Activated CD4-positive, alpha-beta T cell treated with anti-CD3 and anti-CD28 coated beads for 36 hours (primary cell): ENCODE measurements at regions of chr22 and their contacts with region 1.

Region 1: DNA sequence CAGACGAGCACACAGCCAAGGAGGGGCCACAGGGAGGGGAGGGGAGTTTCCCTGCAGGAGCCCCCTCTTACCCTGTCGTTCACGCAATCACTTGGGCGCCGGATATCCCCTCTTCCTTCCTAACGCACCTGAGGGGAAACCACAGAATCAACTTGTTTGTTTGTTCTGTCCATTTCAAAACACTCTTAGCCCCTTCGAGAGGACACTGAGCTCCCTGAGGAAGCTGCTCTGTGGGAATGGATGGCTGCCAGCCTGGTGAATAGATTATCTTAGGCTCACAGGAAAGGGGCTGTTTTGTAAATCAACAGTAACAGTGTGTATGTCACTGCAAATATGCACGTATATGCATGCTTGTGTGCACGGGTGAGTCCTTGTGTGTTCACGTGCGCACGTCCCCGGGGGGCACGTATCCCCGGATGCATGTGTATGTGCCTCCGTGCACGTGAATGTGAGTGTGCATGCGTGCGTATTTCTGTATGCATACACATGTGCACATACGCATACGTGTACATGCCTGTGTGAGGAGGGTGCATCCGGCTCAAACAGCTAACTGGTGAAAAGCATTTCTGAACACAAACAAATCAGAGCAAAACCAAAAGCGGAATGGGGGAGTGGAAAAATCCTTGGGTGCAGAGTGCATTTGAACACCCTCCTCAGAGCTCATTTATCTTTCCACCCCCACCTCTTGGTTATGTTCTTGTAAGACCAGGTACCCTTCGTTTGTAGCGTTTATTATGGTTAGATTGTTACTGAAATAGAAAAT is 7.2 kb downstream of the ARSA start:
- DNase-seq: peak; percentile 87
- ATAC-seq: peak; percentile 70
- H3K4me3 Mint-ChIP-seq: peak overlapping the region; percentile 80
- H3K27ac Mint-ChIP-seq: peak overlapping the region; percentile 97
- H3K4me1 Mint-ChIP-seq: peaks cover 40% of the 10 kb centered on the region
- H3K27me3 Mint-ChIP-seq: no peaks in the 10 kb centered on the region

Region 2: GRCh38 chr22:50244420-50245213 is 376.2 kb before region 1 on chr22 and contains the start of gene TUBGCP6:
- CTCF ChIA-PET with region 1: interaction called, 3 read pairs
- POLR2A ChIA-PET with region 1: interaction called, 4 read pairs
- intact Hi-C with region 1: loop called (anchors 1 to 5 kb)
- DNase-seq: peak; percentile 96
- ATAC-seq: peak; percentile 80
- H3K4me3 Mint-ChIP-seq: peak within 1 kb of the TSS; percentile 94
- H3K27ac Mint-ChIP-seq: peak within 1 kb of the TSS; percentile 100
- H3K4me1 Mint-ChIP-seq: peaks cover 23% of the 10 kb centered on the region
- H3K27me3 Mint-ChIP-seq: no peaks in the 10 kb centered on the region
- total RNA-seq, gene TUBGCP6: 42.2 to 49.2 TPM

Region 3: GRCh38 chr22:50469377-50470305 is 151.1 kb before region 1 on chr22:
- CTCF ChIA-PET with region 1: interaction called, 7 read pairs
- POLR2A ChIA-PET with region 1: interaction called, 4 read pairs
- intact Hi-C with region 1: loop called (anchors 1 kb)
- DNase-seq: peak; percentile 97
- ATAC-seq: peak; percentile 84
- H3K4me3 Mint-ChIP-seq: peak overlapping the region; percentile 59
- H3K27ac Mint-ChIP-seq: peak overlapping the region; percentile 95
- H3K4me1 Mint-ChIP-seq: peaks cover 53% of the 10 kb centered on the region
- H3K27me3 Mint-ChIP-seq: no peaks in the 10 kb centered on the region

Region 4: GRCh38 chr22:50507991-50508884 is 112.5 kb before region 1 on chr22 and contains the start of gene NCAPH2:
- CTCF ChIA-PET with region 1: interaction called, 3 read pairs
- POLR2A ChIA-PET with region 1: no interaction called
- intact Hi-C with region 1: loop called in 1 of 2 experiments (anchors 1 kb)
- DNase-seq: peak; percentile 99
- ATAC-seq: peak; percentile 79
- H3K4me3 Mint-ChIP-seq: peak within 1 kb of the TSS; percentile 91
- H3K27ac Mint-ChIP-seq: peak within 1 kb of the TSS; percentile 95
- H3K4me1 Mint-ChIP-seq: peaks cover 23% of the 10 kb centered on the region
- H3K27me3 Mint-ChIP-seq: no peaks in the 10 kb centered on the region
- total RNA-seq, gene NCAPH2: 115 to 123 TPM

Region 5: DNA sequence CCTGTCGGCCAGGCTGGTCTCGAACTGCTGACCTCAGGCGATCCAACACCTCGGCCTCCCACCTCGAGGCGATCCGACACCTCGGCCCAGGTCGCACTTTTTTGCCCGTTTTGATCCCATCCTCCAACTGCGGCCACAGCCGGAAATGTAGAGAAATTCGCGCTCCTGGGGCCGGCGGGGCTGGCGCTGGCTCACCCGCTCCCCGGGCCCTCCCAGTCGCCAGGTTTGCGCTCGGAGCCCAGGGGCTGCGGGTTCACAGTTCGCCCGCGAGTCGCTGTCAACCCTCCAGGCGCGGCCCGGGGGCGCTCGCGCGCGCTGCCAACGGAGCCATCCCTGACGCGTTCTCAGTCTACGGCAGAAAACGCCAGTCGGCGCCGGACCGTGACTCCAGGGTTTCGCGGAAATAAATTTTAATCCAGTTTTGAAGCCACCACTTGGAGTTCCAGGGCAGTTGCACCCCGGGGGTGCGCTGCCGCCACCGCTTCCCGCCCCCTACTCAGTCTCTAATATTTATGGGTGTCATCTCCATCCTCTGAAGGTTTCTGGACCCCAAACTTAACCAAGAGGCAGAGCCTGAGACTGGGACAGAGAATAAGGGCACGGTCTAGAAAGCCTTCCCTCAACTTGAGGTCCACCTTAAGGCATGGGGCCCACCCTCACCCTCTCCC is 76.6 kb before region 1 on chr22:
- CTCF ChIA-PET with region 1: interaction called, 6 read pairs
- POLR2A ChIA-PET with region 1: interaction called, 12 read pairs
- intact Hi-C with region 1: loop called (anchors 1 to 2 kb)
- DNase-seq: peak; percentile 94
- ATAC-seq: peak; percentile 49
- H3K4me3 Mint-ChIP-seq: peak overlapping the region; percentile 35
- H3K27ac Mint-ChIP-seq: peak overlapping the region; percentile 78
- H3K4me1 Mint-ChIP-seq: peaks cover 61% of the 10 kb centered on the region
- H3K27me3 Mint-ChIP-seq: no peaks in the 10 kb centered on the region

Region 6: DNA sequence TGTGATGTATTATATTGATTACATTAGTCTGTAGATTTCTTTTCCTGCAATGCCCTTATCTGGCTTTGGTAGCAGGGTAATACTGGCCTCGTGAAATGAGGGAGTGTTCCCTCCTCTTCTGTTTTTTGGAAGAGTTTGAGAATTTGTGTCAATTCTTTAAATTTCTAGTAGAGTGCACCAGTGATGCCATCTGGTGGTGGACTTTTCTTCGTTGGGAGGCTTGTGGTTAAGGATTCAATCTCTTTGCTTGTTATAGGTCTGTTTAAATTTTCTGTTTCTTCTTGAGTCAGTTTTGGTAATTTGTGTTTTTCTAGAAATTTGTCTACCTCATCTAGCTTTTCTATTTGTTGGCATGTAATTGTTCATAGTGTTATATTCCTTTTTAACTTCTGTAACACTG is 70.7 kb after region 1 on chr22:
- CTCF ChIA-PET with region 1: interaction called, 5 read pairs
- POLR2A ChIA-PET with region 1: no interaction called
- intact Hi-C with region 1: loop called (anchors 1 to 5 kb)
- DNase-seq: peak; percentile 67
- ATAC-seq: peak; percentile 36
- H3K4me3 Mint-ChIP-seq: no peak overlapping the region
- H3K27ac Mint-ChIP-seq: no peak overlapping the region
- H3K4me1 Mint-ChIP-seq: peaks cover 5% of the 10 kb centered on the region
- H3K27me3 Mint-ChIP-seq: peaks cover 4% of the 10 kb centered on the region